Activated T-helper 2 cell treated with anti-CD3 and anti-CD28 coated beads, Interferon-gamma antibody, Interleukin-2, Interleukin-4, amounts not matched to agents 10 μg/mL and 5 μg/mL and 100 μg/mL, durations not matched to agents 14 hours and 24 hours and 36 hours (primary cell): ENCODE measurements at regions of chr5 and their contacts with region 1.

Region 1: GRCh38 chr5:143824851-143825720 is 13.1 kb downstream of the HMHB1 start:
- DNase-seq: peak; percentile 71
- H3K4me3 Mint-ChIP-seq: no peak overlapping the region
- H3K27ac Mint-ChIP-seq: no peak overlapping the region
- H3K4me1 Mint-ChIP-seq: peaks cover 11% of the 10 kb centered on the region
- H3K27me3 Mint-ChIP-seq: no peaks in the 10 kb centered on the region

Region 2: DNA sequence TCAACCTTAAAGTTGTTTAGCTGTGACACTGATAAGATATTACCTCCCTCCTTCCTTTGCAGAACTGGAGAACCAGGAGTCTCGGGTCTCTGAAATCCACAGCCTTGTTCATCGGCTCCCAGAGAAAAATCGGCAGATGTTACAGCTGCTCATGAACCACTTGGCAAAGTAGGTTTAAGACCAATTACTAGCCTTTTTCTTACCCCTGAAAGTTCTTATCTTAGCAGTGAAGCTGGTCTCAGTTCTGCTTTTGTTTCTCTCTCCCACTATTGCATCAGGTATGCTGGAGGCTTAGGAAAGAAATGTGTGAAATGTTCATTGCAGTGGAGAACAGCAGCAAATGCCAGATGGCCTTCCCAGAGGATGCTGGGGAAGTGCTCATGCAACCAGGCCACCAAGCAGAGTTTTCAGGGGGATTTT is 767.5 kb before region 1 on chr5:
- intact Hi-C with region 1: loop called (anchors 5 kb)
- DNase-seq: no peak
- H3K4me3 Mint-ChIP-seq: no peak overlapping the region
- H3K27ac Mint-ChIP-seq: peak overlapping the region; percentile 96
- H3K4me1 Mint-ChIP-seq: peaks cover 67% of the 10 kb centered on the region
- H3K27me3 Mint-ChIP-seq: no peaks in the 10 kb centered on the region

Region 3: GRCh38 chr5:143314659-143315058 is 510.4 kb before region 1 on chr5:
- intact Hi-C with region 1: loop called (anchors 5 kb)
- DNase-seq: no peak
- H3K4me3 Mint-ChIP-seq: no peak overlapping the region
- H3K27ac Mint-ChIP-seq: peak overlapping the region; percentile 63
- H3K4me1 Mint-ChIP-seq: peaks cover 32% of the 10 kb centered on the region
- H3K27me3 Mint-ChIP-seq: no peaks in the 10 kb centered on the region

Region 4: GRCh38 chr5:143509758-143510221 is 315.3 kb before region 1 on chr5:
- intact Hi-C with region 1: loop called (anchors 2 kb)
- DNase-seq: no peak
- H3K4me3 Mint-ChIP-seq: no peak overlapping the region
- H3K27ac Mint-ChIP-seq: no peak overlapping the region
- H3K4me1 Mint-ChIP-seq: peaks cover 25% of the 10 kb centered on the region
- H3K27me3 Mint-ChIP-seq: no peaks in the 10 kb centered on the region

Region 5: DNA sequence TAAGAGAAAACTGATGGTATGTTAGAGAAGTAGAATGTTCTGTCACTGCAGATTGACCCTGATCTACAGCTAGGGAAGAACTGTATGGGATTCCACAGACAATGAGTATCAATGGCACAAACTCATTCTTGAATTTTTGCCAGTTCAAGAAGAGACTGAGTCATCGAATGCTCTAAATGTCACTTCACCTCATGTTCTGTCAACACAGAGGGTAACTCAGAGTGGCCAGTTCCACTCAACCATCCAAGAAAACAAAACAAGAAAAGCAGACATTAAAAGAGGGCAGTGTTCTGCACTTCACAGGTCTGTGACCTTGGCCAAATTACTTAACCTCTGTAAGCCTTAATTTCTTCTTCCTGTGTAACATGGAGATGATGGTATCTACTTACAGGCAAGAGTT is 145.3 kb before region 1 on chr5:
- intact Hi-C with region 1: loop called (anchors 2 kb)
- DNase-seq: no peak
- H3K4me3 Mint-ChIP-seq: no peak overlapping the region
- H3K27ac Mint-ChIP-seq: peak overlapping the region; percentile 71
- H3K4me1 Mint-ChIP-seq: peaks cover 27% of the 10 kb centered on the region
- H3K27me3 Mint-ChIP-seq: no peaks in the 10 kb centered on the region

Region 6: DNA sequence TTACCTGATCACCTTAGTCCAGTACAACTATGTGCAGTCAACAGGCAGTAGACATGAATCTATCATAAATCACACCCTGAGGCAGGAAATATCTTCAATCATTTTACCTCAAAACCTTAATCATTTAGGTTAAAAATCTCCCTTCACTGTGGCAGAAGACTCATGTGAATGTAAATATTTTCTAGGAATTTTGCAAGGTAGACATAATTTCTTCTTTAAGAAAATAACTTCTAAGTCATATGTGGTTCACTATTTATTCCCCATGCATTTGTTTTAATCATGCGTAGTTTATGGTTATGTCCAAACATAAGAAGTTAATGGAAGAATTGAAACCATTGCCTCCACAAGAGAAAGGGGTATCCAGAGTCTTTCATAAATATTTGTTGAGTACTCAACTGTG is 83.9 kb after region 1 on chr5:
- intact Hi-C with region 1: no loop called
- DNase-seq: no peak
- H3K4me3 Mint-ChIP-seq: no peak overlapping the region
- H3K27ac Mint-ChIP-seq: no peak overlapping the region
- H3K4me1 Mint-ChIP-seq: peaks cover 1% of the 10 kb centered on the region
- H3K27me3 Mint-ChIP-seq: no peaks in the 10 kb centered on the region

Region 7: GRCh38 chr5:143946837-143947236 is 121.8 kb after region 1 on chr5:
- intact Hi-C with region 1: no loop called
- DNase-seq: no peak
- H3K4me3 Mint-ChIP-seq: no peak overlapping the region
- H3K27ac Mint-ChIP-seq: no peak overlapping the region
- H3K4me1 Mint-ChIP-seq: no peaks in the 10 kb centered on the region
- H3K27me3 Mint-ChIP-seq: peaks cover 15% of the 10 kb centered on the region

Region 8: GRCh38 chr5:143977892-143978448 is 152.9 kb after region 1 on chr5:
- intact Hi-C with region 1: no loop called
- DNase-seq: no peak
- H3K4me3 Mint-ChIP-seq: no peak overlapping the region
- H3K27ac Mint-ChIP-seq: no peak overlapping the region
- H3K4me1 Mint-ChIP-seq: no peaks in the 10 kb centered on the region
- H3K27me3 Mint-ChIP-seq: peaks cover 15% of the 10 kb centered on the region

Region 9: DNA sequence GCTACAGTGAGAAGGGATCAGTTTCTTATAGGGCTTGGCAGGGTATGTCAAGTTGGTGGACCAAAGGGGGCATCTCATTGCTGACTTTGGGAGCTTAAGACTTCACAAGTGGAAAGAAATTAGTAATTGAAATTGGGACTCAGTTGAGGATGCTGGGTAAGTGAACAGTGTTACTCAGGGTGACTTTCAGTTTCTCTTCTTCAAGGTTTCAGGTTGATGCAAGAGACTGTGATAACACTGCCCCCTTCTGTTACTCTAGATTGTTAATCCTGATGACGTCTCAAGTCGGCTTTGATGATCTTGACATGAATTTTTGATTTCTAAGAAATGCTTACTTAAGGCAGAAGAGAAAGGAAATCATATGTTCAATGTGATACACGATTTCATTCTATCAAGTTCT is 366.9 kb after region 1 on chr5:
- intact Hi-C with region 1: loop called (anchors 2 kb)
- DNase-seq: peak; percentile 40
- H3K4me3 Mint-ChIP-seq: no peak overlapping the region
- H3K27ac Mint-ChIP-seq: no peak overlapping the region
- H3K4me1 Mint-ChIP-seq: peaks cover 27% of the 10 kb centered on the region
- H3K27me3 Mint-ChIP-seq: peaks cover 7% of the 10 kb centered on the region